Adrenal gland (tissue), 19 donors: ENCODE measurements at regions of chr16 and their contacts with region 1.

Region 1: DNA sequence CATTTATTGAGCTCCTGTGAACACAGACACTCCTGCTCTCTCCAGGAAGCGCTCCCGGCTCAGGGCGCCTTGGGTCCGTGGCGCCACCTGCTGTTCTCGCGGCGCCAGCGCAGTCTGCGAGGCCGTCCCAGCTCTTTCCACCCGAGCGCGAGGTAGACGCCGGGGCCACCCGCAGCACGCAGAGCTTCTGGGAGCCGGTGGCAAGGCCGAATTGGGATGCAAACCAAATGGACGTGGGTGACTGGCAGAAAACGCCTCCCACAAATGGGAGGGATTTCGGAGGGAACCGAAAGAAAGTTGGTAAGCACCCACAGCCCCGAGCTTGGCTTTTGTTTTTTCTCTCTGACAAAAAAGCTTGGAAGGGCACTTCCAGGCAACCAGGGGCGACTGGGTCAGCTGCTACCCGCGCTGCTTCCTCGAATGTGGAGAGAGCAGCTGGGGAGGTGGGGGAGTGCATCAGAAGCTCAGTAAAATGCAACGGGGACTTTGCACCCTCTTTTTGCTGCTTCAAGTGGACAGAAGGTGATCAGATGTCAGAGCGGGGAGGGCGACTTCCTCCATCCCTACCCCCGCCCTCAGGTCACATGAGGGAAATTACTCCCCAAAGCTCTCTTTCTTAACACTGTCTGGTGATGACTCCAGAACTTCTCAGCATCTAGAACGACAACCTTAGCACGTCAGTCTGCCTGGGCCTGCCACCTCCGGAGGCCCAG is 13.5 kb upstream of the N4BP1 start:
- DNase-seq: peak; percentile 86 to 94 (median 91)
- H3K4me3 ChIP-seq: peak overlapping the region in 1 of 4 donors; percentile 35
- H3K27ac ChIP-seq: peak overlapping the region in 4 of 5 donors; percentile 70 to 89 (median 80)
- H3K4me1 ChIP-seq: peaks cover 0 to 14% of the 10 kb centered on the region in 2 donors
- H3K27me3 ChIP-seq: no peaks in the 10 kb centered on the region
- CTCF ChIP-seq: peak; percentile 93 to 99 (median 97)
- POLR2A ChIP-seq: peak in 1 of 2 donors; percentile 60

Region 2: DNA sequence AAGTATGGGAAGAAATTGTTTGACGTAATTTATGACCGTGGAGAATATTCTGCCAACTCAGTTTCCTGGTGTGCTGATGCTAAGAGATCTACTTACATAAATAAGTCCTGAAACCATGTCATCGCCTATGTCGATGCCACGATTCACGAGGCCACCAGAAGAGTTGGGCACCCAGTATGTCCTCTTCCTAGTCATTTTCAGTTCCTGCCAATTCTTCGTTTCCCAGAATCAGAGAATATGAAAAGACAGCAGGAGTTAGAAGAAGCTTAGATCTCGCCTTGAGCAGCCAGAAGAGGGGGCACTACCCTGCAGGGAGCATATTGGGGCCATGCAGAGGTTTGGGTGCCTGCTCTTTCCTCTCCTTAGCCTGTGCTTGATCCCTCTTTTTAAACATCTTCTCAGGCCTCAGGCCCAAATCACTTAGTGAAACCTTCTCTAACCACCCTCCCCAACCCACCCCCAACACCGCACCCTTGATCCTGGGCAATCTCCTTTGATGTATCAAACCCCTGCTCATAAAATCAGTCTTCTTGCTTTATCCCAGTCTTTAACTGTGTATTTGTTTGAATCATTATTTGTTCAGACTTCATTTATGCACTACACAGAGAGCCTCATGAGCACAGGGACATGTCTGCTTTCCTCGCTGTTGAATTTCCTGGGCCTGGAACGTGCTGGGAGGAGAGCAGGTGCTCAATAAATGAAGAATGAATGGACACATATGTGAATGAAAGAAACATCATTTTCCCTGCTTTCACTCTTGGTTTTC is 391.6 kb before region 1 on chr16:
- intact Hi-C with region 1: loop called in 1 of 2 experiments (anchors 10 kb)
- DNase-seq: peak in 6 of 7 donors; percentile 25 to 57 (median 42)
- H3K4me3 ChIP-seq: no peak overlapping the region
- H3K27ac ChIP-seq: no peak overlapping the region
- H3K4me1 ChIP-seq: no peaks in the 10 kb centered on the region
- H3K27me3 ChIP-seq: no peaks in the 10 kb centered on the region
- CTCF ChIP-seq: peak in 3 of 6 experiments; percentile 35 to 45 (median 44)
- POLR2A ChIP-seq: no peak

Region 3: DNA sequence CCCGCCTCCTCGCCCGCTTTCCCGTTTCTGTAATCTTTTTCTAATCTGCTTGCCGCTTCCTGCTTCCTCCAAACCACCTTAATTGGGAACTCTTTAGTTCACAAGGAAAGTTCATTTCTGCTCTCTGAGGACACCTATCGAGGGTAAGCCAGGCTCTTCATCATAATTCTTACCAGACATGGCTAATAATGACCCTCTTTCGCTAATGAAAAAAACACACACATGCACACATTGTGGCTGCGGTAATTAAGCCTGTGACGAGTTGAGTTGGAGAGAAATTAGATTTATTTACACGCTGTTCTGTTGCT is 1131.8 kb after region 1 on chr16:
- intact Hi-C with region 1: no loop called
- DNase-seq: peak in 1 of 7 donors; percentile 3
- H3K4me3 ChIP-seq: peak overlapping the region in 2 of 4 donors; percentile 13 to 41
- H3K27ac ChIP-seq: peak overlapping the region in 3 of 5 donors; percentile 19 to 76 (median 57)
- H3K4me1 ChIP-seq: peaks cover 0 to 5% of the 10 kb centered on the region in 2 donors
- H3K27me3 ChIP-seq: no peaks in the 10 kb centered on the region
- CTCF ChIP-seq: peak in 4 of 6 experiments; percentile 16 to 39 (median 30)
- POLR2A ChIP-seq: no peak